H1 (cell line): ENCODE measurements at regions of chr17 and their contacts with region 1.

Region 1: GRCh38 chr17:50841949-50842354 is 6.6 kb downstream of the WFIKKN2 start:
- DNase-seq: peak; percentile 53 to 90
- H3K4me3 ChIP-seq: no peak overlapping the region
- H3K27ac ChIP-seq: no peak overlapping the region
- H3K4me1 ChIP-seq: peaks cover 0 to 10% (median 4%) of the 10 kb centered on the region in 4 experiments; a peak in 3 of 7 replicates
- H3K27me3 ChIP-seq: no peaks in the 10 kb centered on the region
- CTCF ChIP-seq: peak; percentile 89 to 91 (median 90)
- EP300 ChIP-seq: no peak
- POLR2A ChIP-seq: no peak
- RAD21 ChIP-seq: peak; percentile 86 to 91

Region 2: DNA sequence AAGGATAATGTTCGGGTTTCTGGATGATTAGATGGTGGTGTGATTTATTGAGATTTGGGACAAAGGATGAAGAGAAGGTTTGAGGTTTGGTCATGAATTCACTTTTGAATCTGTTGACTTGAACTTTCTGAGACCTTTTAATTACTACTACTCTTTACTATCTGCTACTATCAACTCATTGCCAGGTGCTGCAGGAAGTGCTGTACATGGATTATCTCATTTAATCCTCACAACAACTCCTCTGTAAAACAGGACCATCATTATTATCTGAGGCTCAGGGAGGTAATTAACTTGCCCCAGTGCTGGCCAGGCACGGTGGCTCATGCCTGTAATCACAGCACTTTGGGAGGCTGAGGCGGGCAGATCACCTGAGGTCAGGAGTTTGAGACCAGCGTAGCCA is 131.3 kb before region 1 on chr17:
- CTCF ChIA-PET with region 1: no interaction called
- POLR2A ChIA-PET with region 1: no interaction called
- DNase-seq: no peak
- H3K4me3 ChIP-seq: no peak overlapping the region
- H3K27ac ChIP-seq: no peak overlapping the region
- H3K4me1 ChIP-seq: peaks cover 0 to 5% (median 4%) of the 10 kb centered on the region in 4 experiments; a peak in 4 of 7 replicates
- H3K27me3 ChIP-seq: no peaks in the 10 kb centered on the region
- CTCF ChIP-seq: no peak
- EP300 ChIP-seq: no peak
- POLR2A ChIP-seq: no peak
- RAD21 ChIP-seq: no peak

Region 3: GRCh38 chr17:50765454-50766221 is 76.3 kb before region 1 on chr17:
- CTCF ChIA-PET with region 1: interaction called, 11 read pairs
- POLR2A ChIA-PET with region 1: interaction called, 3 read pairs
- DNase-seq: no peak
- H3K4me3 ChIP-seq: no peak overlapping the region
- H3K27ac ChIP-seq: no peak overlapping the region
- H3K4me1 ChIP-seq: no peaks in the 10 kb centered on the region
- H3K27me3 ChIP-seq: no peaks in the 10 kb centered on the region
- CTCF ChIP-seq: no peak
- EP300 ChIP-seq: no peak
- POLR2A ChIP-seq: no peak
- RAD21 ChIP-seq: no peak

Region 4: GRCh38 chr17:50771991-50772785 is 69.8 kb before region 1 on chr17:
- CTCF ChIA-PET with region 1: interaction called, 63 read pairs
- POLR2A ChIA-PET with region 1: interaction called, 3 read pairs
- DNase-seq: no peak
- H3K4me3 ChIP-seq: no peak overlapping the region
- H3K27ac ChIP-seq: no peak overlapping the region
- H3K4me1 ChIP-seq: no peaks in the 10 kb centered on the region
- H3K27me3 ChIP-seq: no peaks in the 10 kb centered on the region
- CTCF ChIP-seq: no peak
- EP300 ChIP-seq: no peak
- POLR2A ChIP-seq: no peak
- RAD21 ChIP-seq: no peak

Region 5: GRCh38 chr17:50798424-50799288 is 43.3 kb before region 1 on chr17:
- CTCF ChIA-PET with region 1: interaction called, 52 read pairs
- POLR2A ChIA-PET with region 1: interaction called, 4 read pairs
- DNase-seq: no peak
- H3K4me3 ChIP-seq: no peak overlapping the region
- H3K27ac ChIP-seq: no peak overlapping the region
- H3K4me1 ChIP-seq: peaks cover 0 to 5% (median 2%) of the 10 kb centered on the region in 4 experiments; a peak in 4 of 7 replicates
- H3K27me3 ChIP-seq: no peaks in the 10 kb centered on the region
- CTCF ChIP-seq: no peak
- EP300 ChIP-seq: no peak
- POLR2A ChIP-seq: no peak
- RAD21 ChIP-seq: no peak

Region 6: DNA sequence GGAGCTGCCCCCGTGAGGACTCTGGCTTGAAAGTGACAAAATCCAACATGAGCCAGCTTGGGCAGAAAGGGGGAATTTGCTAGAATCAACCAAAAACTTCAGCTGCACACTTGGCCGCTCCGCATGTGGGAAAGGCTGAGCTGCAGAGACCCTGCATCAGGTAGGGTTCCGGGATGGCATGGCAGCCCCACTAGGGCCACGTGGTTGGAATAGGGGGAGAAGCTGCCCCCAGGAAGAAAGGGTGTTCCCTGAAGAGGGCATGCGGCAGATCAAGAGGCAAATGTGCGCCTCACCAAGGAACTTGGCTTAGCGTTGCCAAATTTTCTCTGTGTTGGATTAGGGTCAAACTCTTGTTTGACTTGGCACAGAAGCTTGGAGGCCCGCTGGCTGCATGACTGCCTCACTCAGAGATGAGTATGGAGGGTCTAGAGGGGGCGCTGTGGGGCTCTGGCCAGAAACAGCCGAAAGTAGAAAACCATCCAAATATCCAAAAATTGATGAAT is 35.8 kb before region 1 on chr17:
- CTCF ChIA-PET with region 1: interaction called, 52 read pairs
- POLR2A ChIA-PET with region 1: no interaction called
- DNase-seq: peak in 1 of 2 experiments; percentile 68
- H3K4me3 ChIP-seq: no peak overlapping the region
- H3K27ac ChIP-seq: no peak overlapping the region
- H3K4me1 ChIP-seq: no peaks in the 10 kb centered on the region
- H3K27me3 ChIP-seq: no peaks in the 10 kb centered on the region
- CTCF ChIP-seq: peak; percentile 54 to 61 (median 58)
- EP300 ChIP-seq: no peak
- POLR2A ChIP-seq: no peak
- RAD21 ChIP-seq: peak; percentile 37 to 53; a peak in 3 of 4 replicates

Region 7: DNA sequence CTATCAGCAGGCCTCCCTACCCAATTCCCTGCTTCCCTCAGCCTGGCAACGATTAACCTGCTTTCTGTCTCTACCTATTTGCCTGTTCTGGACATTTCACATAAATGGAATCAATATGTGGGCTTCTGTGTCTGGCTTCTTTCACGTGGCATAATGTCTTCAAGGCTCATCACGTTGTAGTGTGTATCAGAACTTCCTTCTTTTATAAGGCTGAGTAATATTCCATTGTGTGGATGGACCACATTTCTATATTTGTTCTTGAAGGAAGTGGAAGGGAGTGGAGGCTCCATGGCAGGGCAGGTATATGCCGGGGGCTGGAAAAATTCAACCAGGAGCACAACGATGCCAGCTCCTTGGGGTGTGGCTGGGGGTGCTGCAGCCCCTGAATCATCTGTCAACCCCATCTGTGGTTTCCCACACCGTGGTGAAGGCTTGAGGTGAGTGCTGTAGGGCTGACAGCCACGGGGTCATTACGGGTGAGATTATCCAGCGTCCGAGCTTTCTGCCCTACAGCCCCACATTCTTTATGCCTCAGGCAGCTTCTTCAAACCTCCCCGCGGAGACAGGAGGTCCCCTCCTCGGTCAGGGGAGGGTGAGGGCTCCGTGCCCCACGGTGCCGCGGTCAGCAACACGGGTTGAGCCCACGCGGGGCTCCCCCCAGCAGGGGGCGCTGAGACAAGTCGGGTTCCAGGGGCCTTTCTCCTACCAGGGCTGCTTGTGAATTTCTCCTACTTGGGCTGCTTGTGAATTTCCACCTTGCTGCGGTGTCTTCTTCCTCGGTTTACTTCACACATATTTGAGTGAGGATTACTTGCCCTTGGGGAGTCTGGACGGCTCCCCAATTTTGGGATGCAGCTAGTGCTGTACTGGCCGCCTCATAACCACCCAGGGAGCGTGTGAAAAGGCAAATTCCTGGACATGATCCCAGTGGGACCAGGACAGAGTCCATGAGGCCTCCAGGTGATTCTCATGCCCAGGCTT is 24.9 kb before region 1 on chr17:
- CTCF ChIA-PET with region 1: interaction called, 34 read pairs
- POLR2A ChIA-PET with region 1: no interaction called
- DNase-seq: peak in 1 of 2 experiments; percentile 82
- H3K4me3 ChIP-seq: no peak overlapping the region
- H3K27ac ChIP-seq: no peak overlapping the region
- H3K4me1 ChIP-seq: peaks cover 0 to 5% (median 0%) of the 10 kb centered on the region in 4 experiments; a peak in 2 of 7 replicates
- H3K27me3 ChIP-seq: no peaks in the 10 kb centered on the region; a peak in 1 of 7 replicates
- CTCF ChIP-seq: peak; percentile 67 to 76 (median 68)
- EP300 ChIP-seq: no peak
- POLR2A ChIP-seq: no peak
- RAD21 ChIP-seq: peak; percentile 43 to 62

Region 8: GRCh38 chr17:50828508-50829170 is 13.3 kb before region 1 on chr17:
- CTCF ChIA-PET with region 1: interaction called, 40 read pairs
- POLR2A ChIA-PET with region 1: interaction called, 9 read pairs
- DNase-seq: no peak
- H3K4me3 ChIP-seq: no peak overlapping the region
- H3K27ac ChIP-seq: no peak overlapping the region
- H3K4me1 ChIP-seq: peaks cover 7 to 17% (median 11%) of the 10 kb centered on the region in 4 experiments
- H3K27me3 ChIP-seq: no peaks in the 10 kb centered on the region
- CTCF ChIP-seq: no peak
- EP300 ChIP-seq: no peak
- POLR2A ChIP-seq: no peak
- RAD21 ChIP-seq: no peak

Region 9: GRCh38 chr17:50919321-50920085 is 77.6 kb after region 1 on chr17:
- CTCF ChIA-PET with region 1: no interaction called
- POLR2A ChIA-PET with region 1: no interaction called
- DNase-seq: peak in 1 of 2 experiments; percentile 82
- H3K4me3 ChIP-seq: no peak overlapping the region
- H3K27ac ChIP-seq: no peak overlapping the region; the same call in 1 of the 2 replicates
- H3K4me1 ChIP-seq: peaks cover 2 to 48% (median 34%) of the 10 kb centered on the region in 4 experiments
- H3K27me3 ChIP-seq: peaks cover 0 to 2% (median 0%) of the 10 kb centered on the region in 4 experiments; a peak in 2 of 7 replicates
- CTCF ChIP-seq: no peak
- EP300 ChIP-seq: no peak
- POLR2A ChIP-seq: no peak
- RAD21 ChIP-seq: no peak

Region 10: GRCh38 chr17:51015145-51015558 is 173.2 kb after region 1 on chr17:
- CTCF ChIA-PET with region 1: no interaction called
- POLR2A ChIA-PET with region 1: no interaction called
- DNase-seq: no peak
- H3K4me3 ChIP-seq: no peak overlapping the region
- H3K27ac ChIP-seq: no peak overlapping the region
- H3K4me1 ChIP-seq: no peaks in the 10 kb centered on the region
- H3K27me3 ChIP-seq: no peaks in the 10 kb centered on the region
- CTCF ChIP-seq: no peak
- EP300 ChIP-seq: no peak
- POLR2A ChIP-seq: no peak
- RAD21 ChIP-seq: no peak